H1 (cell line): ENCODE measurements at regions of chr20 and their contacts with region 1.

Region 1: GRCh38 chr20:61886721-61887594 is 178.7 kb downstream of the TAF4 start:
- DNase-seq: peak in 1 of 2 experiments; percentile 66
- H3K4me3 ChIP-seq: no peak overlapping the region
- H3K27ac ChIP-seq: no peak overlapping the region
- H3K4me1 ChIP-seq: no peaks in the 10 kb centered on the region
- H3K27me3 ChIP-seq: peaks cover 0 to 3% (median 0%) of the 10 kb centered on the region in 4 experiments; a peak in 2 of 7 replicates
- CTCF ChIP-seq: peak; percentile 77 to 97 (median 97)
- EP300 ChIP-seq: no peak
- POLR2A ChIP-seq: no peak
- RAD21 ChIP-seq: peak; percentile 81 to 87

Region 2: DNA sequence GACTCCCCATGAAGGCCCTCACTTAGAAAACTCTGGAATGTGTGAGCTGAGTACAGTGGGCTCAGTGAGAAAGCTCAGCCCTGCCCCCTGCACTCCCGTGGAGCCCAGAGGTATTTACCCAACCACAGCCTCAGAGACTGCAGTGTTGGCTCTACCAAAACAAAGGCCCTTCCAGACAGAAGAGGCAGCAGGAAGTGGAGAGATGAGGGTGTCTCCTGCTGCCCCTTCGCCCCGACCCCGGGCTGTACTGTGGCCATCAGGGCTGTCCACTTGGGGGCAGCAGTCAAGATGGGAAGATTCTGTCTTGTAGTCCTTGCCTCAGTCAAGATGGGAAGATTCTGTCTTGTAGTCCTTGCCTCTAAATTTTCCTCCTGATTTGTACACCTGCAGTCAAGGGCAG is 162.6 kb before region 1 on chr20:
- CTCF ChIA-PET with region 1: interaction called, 11 read pairs
- POLR2A ChIA-PET with region 1: no interaction called
- DNase-seq: peak; percentile 7 to 70
- H3K4me3 ChIP-seq: no peak overlapping the region
- H3K27ac ChIP-seq: no peak overlapping the region
- H3K4me1 ChIP-seq: peaks cover 7 to 10% (median 9%) of the 10 kb centered on the region in 4 experiments
- H3K27me3 ChIP-seq: peaks cover 0 to 6% (median 0%) of the 10 kb centered on the region in 4 experiments; a peak in 4 of 7 replicates
- CTCF ChIP-seq: peak; percentile 62 to 77 (median 76)
- EP300 ChIP-seq: no peak
- POLR2A ChIP-seq: no peak
- RAD21 ChIP-seq: peak; percentile 39 to 67; a peak in 3 of 4 replicates

Region 3: GRCh38 chr20:61868466-61869090 is 18.4 kb before region 1 on chr20:
- CTCF ChIA-PET with region 1: interaction called, 45 read pairs
- POLR2A ChIA-PET with region 1: no interaction called
- DNase-seq: no peak
- H3K4me3 ChIP-seq: no peak overlapping the region
- H3K27ac ChIP-seq: no peak overlapping the region
- H3K4me1 ChIP-seq: no peaks in the 10 kb centered on the region
- H3K27me3 ChIP-seq: peaks cover 0 to 5% (median 0%) of the 10 kb centered on the region in 4 experiments; a peak in 4 of 7 replicates
- CTCF ChIP-seq: no peak
- EP300 ChIP-seq: no peak
- POLR2A ChIP-seq: no peak
- RAD21 ChIP-seq: no peak